Caco-2 (cell line): ENCODE measurements at regions of chr21 and their contacts with region 1.

Region 1: DNA sequence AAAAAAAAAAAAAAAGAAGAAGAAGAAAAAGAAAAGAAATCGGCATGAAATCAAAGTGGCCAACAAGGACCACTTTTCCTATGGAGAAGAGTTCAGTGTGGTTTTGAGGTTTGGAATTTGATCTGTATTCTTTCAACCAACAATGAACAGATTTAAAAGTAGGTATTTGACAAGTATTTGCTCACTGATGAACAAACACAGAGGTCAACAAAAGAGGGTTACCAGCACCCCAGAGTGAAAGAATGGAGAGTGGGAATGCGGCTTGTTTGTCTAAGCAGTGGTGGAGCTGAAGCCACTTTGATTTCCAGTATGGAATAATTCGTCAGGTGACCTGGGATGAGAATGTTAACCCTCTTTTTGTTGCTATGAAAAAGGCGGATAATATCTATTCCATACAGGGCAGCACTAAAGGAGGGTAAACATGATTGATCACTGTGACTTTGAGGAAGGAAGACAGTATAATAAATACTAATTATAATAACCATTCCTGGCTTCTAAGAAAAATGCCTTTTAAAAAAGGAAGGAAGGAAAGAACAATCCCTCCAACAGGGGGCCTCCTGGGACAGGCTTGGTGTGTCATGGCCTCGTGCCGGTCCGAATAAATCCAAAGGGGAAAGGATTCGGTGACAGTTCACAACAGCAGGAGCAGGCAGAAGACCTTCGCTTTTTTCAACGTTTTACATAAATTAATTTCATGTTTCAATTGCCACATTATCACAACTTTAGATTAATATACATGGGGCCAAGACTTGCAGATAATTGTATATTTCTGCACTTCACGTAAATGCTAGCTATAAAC is 37.2 kb upstream of the SIM2 start:
- DNase-seq: peak; percentile 41 to 48
- H3K4me3 ChIP-seq: no peak overlapping the region
- H3K4me3 Mint-ChIP-seq: peak overlapping the region; percentile 2
- H3K27ac Mint-ChIP-seq: no peak overlapping the region
- H3K4me1 ChIP-seq: peaks cover 6% of the 10 kb centered on the region; the same call in 1 of the 2 replicates
- H3K4me1 Mint-ChIP-seq: peaks cover 18% of the 10 kb centered on the region
- H3K27me3 ChIP-seq: no peaks in the 10 kb centered on the region
- H3K27me3 Mint-ChIP-seq: no peaks in the 10 kb centered on the region
- CTCF ChIP-seq: peak in 1 of 2 experiments; percentile 43

Region 2: DNA sequence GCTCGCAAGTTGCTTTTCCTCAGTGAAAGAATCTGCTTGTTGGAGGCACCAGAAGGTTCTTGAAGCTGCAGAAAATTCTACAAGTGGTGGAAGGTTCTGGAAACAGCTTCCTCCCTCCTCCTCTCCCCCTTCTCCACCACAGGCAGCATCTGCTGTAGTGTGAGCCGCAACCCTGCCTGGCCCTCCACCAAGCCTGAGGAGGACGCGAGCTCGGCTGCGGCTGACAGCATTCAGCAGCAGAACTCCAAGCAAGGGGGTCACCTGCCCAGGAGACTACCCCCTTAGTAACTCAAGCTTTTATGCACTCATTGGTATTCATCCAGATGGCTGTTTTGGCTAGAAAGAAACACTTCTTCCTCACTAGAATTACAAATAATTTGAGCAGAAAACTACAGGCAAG is 133.0 kb before region 1 on chr21:
- CTCF ChIA-PET with region 1: no interaction called
- POLR2A ChIA-PET with region 1: no interaction called
- intact Hi-C with region 1: no loop called
- DNase-seq: no peak
- H3K4me3 ChIP-seq: no peak overlapping the region
- H3K4me3 Mint-ChIP-seq: no peak overlapping the region
- H3K27ac Mint-ChIP-seq: no peak overlapping the region
- H3K4me1 ChIP-seq: no peaks in the 10 kb centered on the region
- H3K4me1 Mint-ChIP-seq: no peaks in the 10 kb centered on the region
- H3K27me3 ChIP-seq: no peaks in the 10 kb centered on the region
- H3K27me3 Mint-ChIP-seq: peaks cover 19% of the 10 kb centered on the region
- CTCF ChIP-seq: no peak

Region 3: GRCh38 chr21:36730291-36731281 is 68.9 kb after region 1 on chr21:
- CTCF ChIA-PET with region 1: no interaction called
- POLR2A ChIA-PET with region 1: no interaction called
- intact Hi-C with region 1: no loop called
- DNase-seq: peak in 1 of 2 experiments; percentile 11
- H3K4me3 ChIP-seq: no peak overlapping the region
- H3K4me3 Mint-ChIP-seq: no peak overlapping the region
- H3K27ac Mint-ChIP-seq: peak overlapping the region; percentile 61
- H3K4me1 ChIP-seq: peaks cover 10% of the 10 kb centered on the region; the same call in 1 of the 2 replicates
- H3K4me1 Mint-ChIP-seq: peaks cover 11% of the 10 kb centered on the region
- H3K27me3 ChIP-seq: no peaks in the 10 kb centered on the region
- H3K27me3 Mint-ChIP-seq: no peaks in the 10 kb centered on the region
- CTCF ChIP-seq: no peak

Region 4: DNA sequence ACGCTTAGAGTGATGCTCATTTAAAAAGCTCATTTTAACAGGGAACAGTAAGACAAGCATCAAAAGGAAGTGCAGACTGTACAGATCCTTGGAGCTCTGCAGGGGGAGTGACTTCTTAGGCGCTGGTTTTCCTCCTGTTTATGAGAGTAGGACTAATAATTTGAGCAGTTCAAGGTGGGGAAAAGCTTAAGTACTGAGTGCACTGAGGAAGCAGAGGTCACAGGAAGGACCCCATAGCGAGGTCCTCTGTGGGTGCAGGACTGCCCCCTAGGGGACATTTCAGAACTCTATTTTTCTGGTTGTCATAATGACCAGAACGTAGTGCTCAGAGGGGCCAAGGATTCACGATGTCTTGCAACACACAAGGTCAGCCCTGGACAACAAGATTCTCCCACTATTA is 192.7 kb after region 1 on chr21:
- CTCF ChIA-PET with region 1: no interaction called
- POLR2A ChIA-PET with region 1: no interaction called
- intact Hi-C with region 1: loop called (anchors 10 kb)
- DNase-seq: peak in 1 of 2 experiments; percentile 66
- H3K4me3 ChIP-seq: no peak overlapping the region
- H3K4me3 Mint-ChIP-seq: no peak overlapping the region
- H3K27ac Mint-ChIP-seq: no peak overlapping the region
- H3K4me1 ChIP-seq: peaks cover 16% of the 10 kb centered on the region
- H3K4me1 Mint-ChIP-seq: peaks cover 7% of the 10 kb centered on the region
- H3K27me3 ChIP-seq: no peaks in the 10 kb centered on the region
- H3K27me3 Mint-ChIP-seq: no peaks in the 10 kb centered on the region
- CTCF ChIP-seq: peak; percentile 39 to 82